CD4-positive, alpha-beta T cell (primary cell): ENCODE measurements at regions of chr5 and their contacts with region 1.

Region 1: DNA sequence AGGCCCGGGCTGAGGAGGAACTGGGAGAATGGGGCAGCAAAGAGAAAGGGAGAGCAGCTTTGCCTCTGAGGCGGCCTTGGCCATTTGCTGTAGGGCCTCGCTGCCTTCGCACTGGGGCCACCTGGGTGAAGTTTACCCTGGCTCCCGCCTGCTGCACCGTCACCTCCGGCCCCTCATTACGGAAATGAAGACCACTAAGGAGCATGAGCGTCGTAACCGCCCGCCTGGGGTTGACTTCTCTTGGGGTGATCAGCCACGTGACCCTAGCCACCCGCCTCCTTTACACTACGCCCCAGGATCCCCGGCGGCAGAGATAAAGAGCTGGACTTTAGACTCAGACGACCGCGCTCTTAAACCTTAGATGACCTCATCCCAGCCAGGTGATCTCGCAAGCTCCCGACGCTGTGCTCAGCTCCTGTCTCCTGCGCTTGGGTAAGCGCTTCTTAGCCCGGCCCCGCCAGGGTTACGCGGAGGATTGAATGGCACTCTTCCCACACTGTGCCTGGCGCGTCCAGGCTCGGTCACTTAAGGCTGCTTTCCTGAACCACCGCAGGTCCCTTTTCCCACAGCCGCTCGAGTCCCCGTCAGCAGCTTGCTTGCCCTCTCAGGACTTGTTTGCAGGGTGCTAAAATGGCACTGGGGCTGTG is 107.9 kb upstream of the LARP1 start:
- DNase-seq: peak in 6 of 14 experiments; percentile 4 to 24 (median 15)
- ATAC-seq: peak; percentile 32
- H3K4me3 ChIP-seq: peak overlapping the region; percentile 48
- H3K4me3 Mint-ChIP-seq: peak overlapping the region; percentile 82
- H3K27ac ChIP-seq: no peak overlapping the region
- H3K27ac Mint-ChIP-seq: no peak overlapping the region
- H3K4me1 ChIP-seq: peaks cover 13% of the 10 kb centered on the region
- H3K4me1 Mint-ChIP-seq: peaks cover 16% of the 10 kb centered on the region
- H3K27me3 ChIP-seq: peaks cover 16% of the 10 kb centered on the region in 2 experiments
- H3K27me3 Mint-ChIP-seq: peaks cover 29% of the 10 kb centered on the region
- CTCF ChIP-seq: no peak

Region 2: GRCh38 chr5:153974131-153974812 is 673.0 kb before region 1 on chr5:
- CTCF ChIA-PET with region 1: no interaction called
- POLR2A ChIA-PET with region 1: no interaction called
- intact Hi-C with region 1: loop called in 1 of 2 experiments (anchors 5 kb)
- DNase-seq: peak in 5 of 14 experiments; percentile 10 to 62 (median 40)
- ATAC-seq: peak; percentile 49
- H3K4me3 ChIP-seq: no peak overlapping the region
- H3K4me3 Mint-ChIP-seq: no peak overlapping the region
- H3K27ac ChIP-seq: no peak overlapping the region
- H3K27ac Mint-ChIP-seq: no peak overlapping the region
- H3K4me1 ChIP-seq: peaks cover 3% of the 10 kb centered on the region
- H3K4me1 Mint-ChIP-seq: no peaks in the 10 kb centered on the region
- H3K27me3 ChIP-seq: peaks cover 0 to 5% of the 10 kb centered on the region in 2 experiments
- H3K27me3 Mint-ChIP-seq: peaks cover 12% of the 10 kb centered on the region
- CTCF ChIP-seq: peak; percentile 69

Region 3: DNA sequence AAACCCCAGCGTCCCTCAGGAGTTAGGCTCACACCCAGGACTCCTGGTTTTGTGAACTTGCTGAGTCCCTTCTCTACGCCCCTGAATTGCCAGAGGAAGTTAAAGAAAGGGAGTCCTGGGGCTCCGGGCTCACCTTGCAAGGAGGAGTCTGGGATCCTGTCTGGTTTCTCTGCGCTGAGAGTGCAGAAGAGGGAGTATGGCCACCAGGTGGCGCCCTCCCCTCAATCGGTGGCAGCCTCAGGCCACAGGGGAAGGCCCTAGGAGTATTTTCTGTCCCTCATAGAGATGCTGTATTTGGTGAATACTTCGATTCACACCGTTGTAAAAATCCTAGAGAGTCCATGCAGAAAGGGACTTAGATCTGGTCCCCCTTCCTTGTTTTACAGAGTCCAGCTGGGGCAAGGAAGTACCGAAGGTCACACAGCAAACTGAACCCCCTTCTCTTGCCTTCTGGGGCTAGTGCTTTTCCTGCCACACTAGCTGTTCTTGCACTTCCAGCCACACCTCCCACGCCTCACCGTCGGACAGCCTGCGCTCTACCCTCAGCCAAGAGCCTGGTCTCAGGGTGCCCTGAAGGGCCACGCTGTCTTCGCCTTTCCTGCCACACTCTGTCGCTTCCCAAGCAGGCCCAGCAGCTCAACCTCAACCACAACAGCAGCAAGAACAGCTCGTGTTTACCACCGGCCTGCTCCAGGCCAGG is 179.4 kb before region 1 on chr5:
- CTCF ChIA-PET with region 1: no interaction called
- POLR2A ChIA-PET with region 1: no interaction called
- intact Hi-C with region 1: loop called (anchors 5 to 10 kb)
- DNase-seq: peak; percentile 48 to 82 (median 66)
- ATAC-seq: peak; percentile 92
- H3K4me3 ChIP-seq: no peak overlapping the region
- H3K4me3 Mint-ChIP-seq: no peak overlapping the region
- H3K27ac ChIP-seq: no peak overlapping the region
- H3K27ac Mint-ChIP-seq: no peak overlapping the region
- H3K4me1 ChIP-seq: peaks cover 12% of the 10 kb centered on the region
- H3K4me1 Mint-ChIP-seq: peaks cover 8% of the 10 kb centered on the region
- H3K27me3 ChIP-seq: peaks cover 26 to 32% of the 10 kb centered on the region in 2 experiments
- H3K27me3 Mint-ChIP-seq: peaks cover 47% of the 10 kb centered on the region
- CTCF ChIP-seq: peak; percentile 85

Region 4: GRCh38 chr5:154478224-154478565 is 169.0 kb before region 1 on chr5 and contains the start of gene HAND1:
- CTCF ChIA-PET with region 1: no interaction called
- POLR2A ChIA-PET with region 1: no interaction called
- intact Hi-C with region 1: loop called in 1 of 2 experiments (anchors 10 kb)
- DNase-seq: no peak
- ATAC-seq: no peak
- H3K4me3 ChIP-seq: peak within 1 kb of the TSS; percentile 12
- H3K4me3 Mint-ChIP-seq: peak within 1 kb of the TSS; percentile 76
- H3K27ac ChIP-seq: no peak within 1 kb of the TSS
- H3K27ac Mint-ChIP-seq: no peak within 1 kb of the TSS
- H3K4me1 ChIP-seq: peaks cover 74% of the 10 kb centered on the region
- H3K4me1 Mint-ChIP-seq: peaks cover 64% of the 10 kb centered on the region
- H3K27me3 ChIP-seq: peaks cover 90 to 100% of the 10 kb centered on the region in 2 experiments
- H3K27me3 Mint-ChIP-seq: peaks cover 90% of the 10 kb centered on the region
- CTCF ChIP-seq: no peak
- total RNA-seq, gene HAND1: not detected

Region 5: DNA sequence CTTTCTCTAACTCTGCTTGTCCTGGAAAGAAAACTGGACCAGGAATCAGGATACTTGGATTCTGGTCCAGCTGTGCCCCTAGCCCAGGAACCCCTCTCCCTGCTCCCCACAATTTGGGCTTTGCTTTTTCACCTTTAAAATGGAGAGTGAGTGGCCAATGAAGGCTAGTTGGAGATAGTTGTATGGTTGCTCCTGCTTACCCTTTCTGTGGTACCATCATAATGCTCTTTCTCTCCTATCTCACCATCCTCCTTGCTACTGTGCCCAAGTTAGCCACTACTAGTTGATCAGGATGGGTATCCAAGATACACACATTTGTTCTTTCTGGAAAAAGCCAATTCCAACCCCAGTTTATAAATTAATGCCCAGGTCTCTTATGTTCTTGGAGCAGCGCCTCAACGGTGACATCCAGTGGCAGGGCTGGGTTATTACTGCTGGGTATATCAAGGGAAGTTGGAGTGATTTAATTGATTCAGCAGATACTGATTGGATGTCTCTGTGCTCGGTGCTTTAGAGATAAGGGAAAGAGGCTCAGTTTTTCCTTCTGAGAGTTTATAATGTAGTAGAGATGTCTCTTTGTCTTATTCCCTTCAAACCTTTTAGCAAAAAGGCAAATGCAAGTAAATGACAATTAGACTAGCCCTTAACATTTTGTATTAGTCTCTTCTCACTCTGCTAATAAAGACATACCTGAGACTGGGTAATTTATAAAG is 164.6 kb after region 1 on chr5:
- CTCF ChIA-PET with region 1: interaction called, 7 read pairs
- POLR2A ChIA-PET with region 1: no interaction called
- intact Hi-C with region 1: loop called (anchors 1 kb)
- DNase-seq: peak; percentile 50 to 82 (median 62)
- ATAC-seq: peak; percentile 83
- H3K4me3 ChIP-seq: no peak overlapping the region
- H3K4me3 Mint-ChIP-seq: no peak overlapping the region
- H3K27ac ChIP-seq: no peak overlapping the region
- H3K27ac Mint-ChIP-seq: peak overlapping the region; percentile 38
- H3K4me1 ChIP-seq: peaks cover 28% of the 10 kb centered on the region
- H3K4me1 Mint-ChIP-seq: peaks cover 40% of the 10 kb centered on the region
- H3K27me3 ChIP-seq: no peaks in the 10 kb centered on the region
- H3K27me3 Mint-ChIP-seq: no peaks in the 10 kb centered on the region
- CTCF ChIP-seq: peak; percentile 94

Region 6: GRCh38 chr5:155004138-155004744 is 357.0 kb after region 1 on chr5:
- CTCF ChIA-PET with region 1: no interaction called
- POLR2A ChIA-PET with region 1: no interaction called
- intact Hi-C with region 1: loop called in 1 of 2 experiments (anchors 5 kb)
- DNase-seq: peak in 4 of 14 experiments; percentile 2 to 20 (median 16)
- ATAC-seq: no peak
- H3K4me3 ChIP-seq: no peak overlapping the region
- H3K4me3 Mint-ChIP-seq: no peak overlapping the region
- H3K27ac ChIP-seq: no peak overlapping the region
- H3K27ac Mint-ChIP-seq: no peak overlapping the region
- H3K4me1 ChIP-seq: no peaks in the 10 kb centered on the region
- H3K4me1 Mint-ChIP-seq: no peaks in the 10 kb centered on the region
- H3K27me3 ChIP-seq: peaks cover 0 to 8% of the 10 kb centered on the region in 2 experiments
- H3K27me3 Mint-ChIP-seq: peaks cover 48% of the 10 kb centered on the region
- CTCF ChIP-seq: no peak